Gastrocnemius medialis (tissue), 4 donors: ENCODE measurements at regions of chr11 and their contacts with region 1.

Region 1: DNA sequence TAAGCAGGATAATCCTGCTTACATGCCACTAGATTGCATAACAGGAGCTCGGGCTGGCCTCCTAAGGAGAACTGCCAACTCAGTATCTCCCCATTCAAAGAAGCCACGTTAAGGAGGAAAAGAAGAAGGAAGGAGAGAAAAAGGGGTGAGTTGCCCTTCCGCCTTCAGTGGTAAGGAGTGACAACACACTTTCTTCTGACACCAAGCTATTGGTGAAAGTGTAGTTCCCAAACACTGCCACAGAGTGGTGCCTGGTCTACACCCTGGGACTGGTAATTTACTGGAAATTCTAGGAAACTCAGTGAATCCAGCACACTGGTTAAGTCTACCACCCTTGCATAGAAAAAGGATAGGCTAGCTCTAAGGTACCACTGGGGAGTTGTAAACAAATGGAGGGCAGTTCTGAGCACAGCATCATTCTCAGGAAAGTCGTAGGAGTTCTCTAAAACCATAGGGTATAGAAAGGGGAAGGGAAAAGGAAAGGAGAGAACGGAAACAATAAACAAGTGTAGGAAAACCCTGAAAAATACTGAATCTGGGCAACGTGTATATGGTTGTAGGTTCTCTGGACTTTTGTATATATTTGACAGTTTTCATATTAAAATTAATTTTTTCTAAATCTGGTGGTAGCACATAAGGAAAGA is 58.2 kb downstream of the RRAS2 start:
- DNase-seq: peak; percentile 26 to 55
- ATAC-seq: peak; percentile 87 to 88
- H3K4me3 ChIP-seq: no peak overlapping the region
- H3K27ac ChIP-seq: peak overlapping the region in 1 of 4 donors; percentile 20
- H3K4me1 ChIP-seq: peaks cover 26 to 41% of the 10 kb centered on the region in 2 donors
- H3K27me3 ChIP-seq: no peaks in the 10 kb centered on the region
- CTCF ChIP-seq: peak; percentile 59 to 81 (median 77)
- POLR2A ChIP-seq: no peak

Region 2: DNA sequence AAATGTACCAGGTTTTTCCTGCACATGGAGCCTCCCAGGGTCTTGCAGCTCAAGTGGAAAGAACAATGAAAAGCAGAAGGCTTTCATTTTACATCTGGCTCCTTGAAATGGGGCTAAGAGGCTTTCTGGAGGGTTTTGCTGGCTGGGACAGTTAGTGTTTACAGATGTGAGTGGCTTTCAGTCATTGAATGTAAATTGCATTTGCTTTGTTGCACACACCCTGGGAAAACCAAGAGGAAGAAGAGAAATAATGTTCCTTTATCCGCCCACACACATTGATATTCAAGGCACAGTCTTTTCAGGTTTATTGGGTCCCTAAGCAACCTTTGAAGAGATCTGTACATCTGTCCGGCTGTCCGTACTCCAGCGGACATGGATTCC is 193.7 kb before region 1 on chr11:
- in situ Hi-C with region 1: no loop called
- intact Hi-C with region 1: no loop called
- DNase-seq: no peak
- ATAC-seq: no peak
- H3K4me3 ChIP-seq: no peak overlapping the region
- H3K27ac ChIP-seq: no peak overlapping the region
- H3K4me1 ChIP-seq: no peaks in the 10 kb centered on the region
- H3K27me3 ChIP-seq: no peaks in the 10 kb centered on the region
- CTCF ChIP-seq: no peak
- POLR2A ChIP-seq: no peak

Region 3: GRCh38 chr11:14193644-14194043 is 107.1 kb before region 1 on chr11:
- in situ Hi-C with region 1: no loop called
- intact Hi-C with region 1: no loop called
- DNase-seq: no peak
- ATAC-seq: no peak
- H3K4me3 ChIP-seq: no peak overlapping the region
- H3K27ac ChIP-seq: no peak overlapping the region
- H3K4me1 ChIP-seq: peaks cover 0 to 3% of the 10 kb centered on the region in 2 donors
- H3K27me3 ChIP-seq: no peaks in the 10 kb centered on the region
- CTCF ChIP-seq: no peak
- POLR2A ChIP-seq: no peak

Region 4: GRCh38 chr11:14358729-14359439 is 58.1 kb after region 1 on chr11 and contains the start of gene RRAS2:
- in situ Hi-C with region 1: no loop called
- intact Hi-C with region 1: loop called (anchors 1 kb)
- DNase-seq: peak; percentile 63 to 77
- ATAC-seq: peak; percentile 74 to 77
- H3K4me3 ChIP-seq: peak within 1 kb of the TSS; percentile 72 to 91 (median 78)
- H3K27ac ChIP-seq: peak within 1 kb of the TSS; percentile 79 to 95 (median 80)
- H3K4me1 ChIP-seq: peaks cover 31 to 33% of the 10 kb centered on the region in 2 donors
- H3K27me3 ChIP-seq: no peaks in the 10 kb centered on the region
- CTCF ChIP-seq: peak in 2 of 5 experiments; percentile 15 to 16
- POLR2A ChIP-seq: peak; percentile 94
- total RNA-seq, gene RRAS2: 52.8 to 81.9 (median 59.8) TPM

Region 5: GRCh38 chr11:14422052-14422813 is 121.5 kb after region 1 on chr11:
- in situ Hi-C with region 1: no loop called
- intact Hi-C with region 1: loop called (anchors 10 kb)
- DNase-seq: peak; percentile 62 to 88
- ATAC-seq: peak; percentile 96
- H3K4me3 ChIP-seq: no peak overlapping the region
- H3K27ac ChIP-seq: peak overlapping the region in 3 of 4 donors; percentile 12 to 48 (median 36)
- H3K4me1 ChIP-seq: peaks cover 22 to 23% of the 10 kb centered on the region in 2 donors
- H3K27me3 ChIP-seq: no peaks in the 10 kb centered on the region
- CTCF ChIP-seq: no peak
- POLR2A ChIP-seq: no peak

Region 6: DNA sequence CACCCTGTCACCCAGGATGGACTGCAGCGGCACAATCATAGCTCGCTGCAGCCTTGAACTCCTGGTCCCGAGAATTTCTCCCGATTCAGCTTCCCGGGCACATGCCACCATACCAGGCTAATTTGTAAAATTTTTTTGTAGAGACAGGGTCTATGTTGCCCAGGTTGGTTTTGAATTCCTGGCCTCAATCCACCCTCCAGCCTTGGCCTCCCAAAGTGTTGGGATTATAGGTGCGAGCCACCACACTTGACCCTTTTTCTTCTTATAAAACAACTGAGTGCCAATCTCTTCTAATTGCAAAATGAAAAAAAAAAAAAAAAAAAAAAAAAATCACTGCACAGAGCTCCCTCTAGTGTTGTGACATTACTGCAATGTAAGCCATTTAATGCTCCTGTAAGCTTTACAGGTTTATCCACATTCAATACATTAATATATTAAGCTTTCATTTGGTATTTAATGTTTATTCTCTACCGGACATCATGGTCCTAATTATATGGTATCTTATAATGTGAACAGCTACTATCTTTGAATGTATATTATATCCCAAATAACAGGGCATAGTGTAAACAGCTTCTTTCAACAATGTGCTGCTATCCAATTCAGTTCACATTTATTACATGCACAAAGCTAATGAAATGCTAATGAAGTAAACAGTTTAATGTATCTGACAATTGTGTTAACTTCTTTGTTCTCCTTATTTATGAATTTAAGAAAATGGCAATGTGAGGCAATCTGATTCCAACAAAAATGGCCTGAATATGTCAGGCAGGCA is 154.3 kb after region 1 on chr11:
- in situ Hi-C with region 1: loop called in 3 of 4 experiments (anchors 5 to 10 kb)
- intact Hi-C with region 1: loop called (anchors 1 kb)
- DNase-seq: no peak
- ATAC-seq: peak; percentile 69 to 80
- H3K4me3 ChIP-seq: no peak overlapping the region
- H3K27ac ChIP-seq: no peak overlapping the region
- H3K4me1 ChIP-seq: no peaks in the 10 kb centered on the region
- H3K27me3 ChIP-seq: no peaks in the 10 kb centered on the region
- CTCF ChIP-seq: peak in 4 of 5 experiments; percentile 23 to 62 (median 49)
- POLR2A ChIP-seq: no peak

Region 7: GRCh38 chr11:14668731-14669301 is 368.0 kb after region 1 on chr11:
- in situ Hi-C with region 1: no loop called
- intact Hi-C with region 1: no loop called
- DNase-seq: no peak
- ATAC-seq: no peak
- H3K4me3 ChIP-seq: no peak overlapping the region
- H3K27ac ChIP-seq: no peak overlapping the region
- H3K4me1 ChIP-seq: no peaks in the 10 kb centered on the region
- H3K27me3 ChIP-seq: no peaks in the 10 kb centered on the region
- CTCF ChIP-seq: no peak
- POLR2A ChIP-seq: no peak